A673 (cell line): ENCODE measurements at regions of chr1 and their contacts with region 1.

Region 1: GRCh38 chr1:187121661-187122060 is 292.9 kb downstream of the PLA2G4A start:
- DNase-seq: no peak
- H3K4me3 ChIP-seq: no peak overlapping the region
- H3K27ac ChIP-seq: no peak overlapping the region
- H3K4me1 ChIP-seq: no peaks in the 10 kb centered on the region
- H3K27me3 ChIP-seq: no peaks in the 10 kb centered on the region
- CTCF ChIP-seq: no peak

Region 2: DNA sequence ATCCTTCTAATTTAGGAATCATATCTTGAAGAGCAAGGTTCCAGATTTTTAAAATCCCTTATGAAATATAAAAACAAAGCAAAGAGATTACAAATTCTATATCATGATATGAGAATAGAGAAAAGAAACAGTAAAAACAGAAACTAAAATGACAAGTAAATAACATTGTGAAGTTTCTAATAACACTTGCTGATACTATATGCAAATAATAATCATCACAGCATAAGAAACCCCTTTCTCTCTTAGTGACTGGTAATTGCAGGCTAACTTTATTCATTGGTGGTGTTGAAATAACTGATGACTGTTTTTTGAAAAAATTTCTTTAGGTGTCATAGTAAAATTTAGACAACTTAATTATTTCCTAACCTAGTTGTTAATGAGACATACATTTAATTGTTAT is 11.3 kb before region 1 on chr1:
- CTCF ChIA-PET with region 1: no interaction called
- POLR2A ChIA-PET with region 1: interaction called, 19 read pairs
- intact Hi-C with region 1: no loop called
- DNase-seq: no peak
- H3K4me3 ChIP-seq: no peak overlapping the region
- H3K27ac ChIP-seq: no peak overlapping the region
- H3K4me1 ChIP-seq: no peaks in the 10 kb centered on the region
- H3K27me3 ChIP-seq: no peaks in the 10 kb centered on the region
- CTCF ChIP-seq: no peak

Region 3: GRCh38 chr1:187443939-187444338 is 322.3 kb after region 1 on chr1:
- CTCF ChIA-PET with region 1: no interaction called
- POLR2A ChIA-PET with region 1: no interaction called
- intact Hi-C with region 1: no loop called
- DNase-seq: no peak
- H3K4me3 ChIP-seq: no peak overlapping the region
- H3K27ac ChIP-seq: no peak overlapping the region
- H3K4me1 ChIP-seq: no peaks in the 10 kb centered on the region
- H3K27me3 ChIP-seq: no peaks in the 10 kb centered on the region
- CTCF ChIP-seq: no peak